K562 (cell line): ENCODE measurements at regions of chr4 and their contacts with region 1.

Region 1: DNA sequence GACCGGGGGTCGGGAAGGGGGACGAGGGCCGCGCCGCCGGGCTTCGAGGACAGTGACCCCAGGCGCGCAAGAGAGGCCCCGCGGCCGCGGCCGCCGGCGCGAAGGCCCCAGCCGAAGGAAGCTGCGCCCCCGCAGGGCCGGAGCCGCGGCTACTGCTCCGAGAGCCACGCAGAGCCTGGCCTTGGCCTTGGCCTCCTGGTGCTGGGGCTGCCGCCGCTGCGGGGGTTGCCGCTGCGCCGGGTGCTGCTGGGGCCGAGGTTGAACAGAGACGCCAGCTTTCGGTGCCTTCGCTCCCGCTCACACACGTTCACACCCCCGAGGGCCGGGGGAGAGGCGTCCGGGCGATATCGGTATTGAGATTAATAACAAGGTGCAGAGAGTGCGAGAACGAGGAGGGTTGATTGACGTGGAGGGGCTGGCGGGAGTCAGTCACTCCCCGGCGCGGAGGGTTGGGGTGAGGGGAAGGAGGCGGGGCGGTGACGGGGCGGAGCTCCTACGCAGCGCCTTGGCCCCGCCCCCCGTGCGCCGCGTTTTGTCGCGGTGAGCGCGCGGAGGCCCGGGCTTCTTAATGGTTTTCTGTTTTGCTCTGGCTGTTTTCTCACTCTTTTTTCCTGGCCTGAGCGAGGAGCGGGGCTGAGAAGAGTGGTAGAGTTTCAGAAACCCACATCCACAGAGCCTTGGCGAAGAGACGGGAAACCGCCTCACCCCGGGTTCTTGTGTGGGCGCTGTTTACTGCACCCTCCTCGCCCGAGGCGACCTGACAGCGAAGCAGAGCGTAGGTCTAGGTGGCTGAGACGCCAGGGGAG is 878 bp upstream of the CNOT6L start:
- DNase-seq: peak; percentile 93 to 94 (median 94)
- ATAC-seq: peak; percentile 87
- H3K4me3 ChIP-seq: peak overlapping the region; percentile 66
- H3K27ac ChIP-seq: peak overlapping the region; percentile 87
- H3K4me1 ChIP-seq: peaks cover 10 to 15% of the 10 kb centered on the region in 2 experiments; a peak in 4 of 5 replicates
- H3K27me3 ChIP-seq: no peaks in the 10 kb centered on the region
- CTCF ChIP-seq: peak; percentile 14 to 15 (median 14); a peak in 2 of 6 replicates
- EP300 ChIP-seq: no peak; the same call in 1 of the 2 replicates
- POLR2A ChIP-seq: peak; percentile 93
- RAD21 ChIP-seq: no peak

Region 2: DNA sequence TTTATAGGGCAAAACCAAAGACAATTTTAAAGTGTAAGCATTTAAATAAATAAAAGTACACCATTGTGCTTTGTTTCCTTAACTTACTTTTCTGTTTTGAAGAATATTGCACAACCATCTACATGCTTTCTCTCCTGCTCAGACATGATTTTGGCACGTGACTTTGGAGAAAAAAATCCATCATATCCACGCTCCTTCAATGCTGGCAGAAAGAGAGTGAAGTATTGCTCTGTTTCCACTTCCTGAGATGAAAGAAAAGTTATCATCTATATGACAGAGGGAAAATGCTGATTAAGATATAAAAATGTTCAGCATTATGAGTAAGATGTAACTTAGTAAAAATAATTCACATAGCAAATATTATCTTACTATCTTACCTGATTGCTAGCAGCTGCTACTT is 78.0 kb before region 1 on chr4:
- CTCF ChIA-PET with region 1: no interaction called
- POLR2A ChIA-PET with region 1: no interaction called
- in situ Hi-C with region 1: no loop called
- intact Hi-C with region 1: loop called (anchors 10 kb)
- DNase-seq: no peak
- ATAC-seq: no peak
- H3K4me3 ChIP-seq: no peak overlapping the region
- H3K27ac ChIP-seq: no peak overlapping the region
- H3K4me1 ChIP-seq: no peaks in the 10 kb centered on the region
- H3K27me3 ChIP-seq: no peaks in the 10 kb centered on the region
- CTCF ChIP-seq: no peak
- EP300 ChIP-seq: no peak
- POLR2A ChIP-seq: no peak
- RAD21 ChIP-seq: no peak

Region 3: GRCh38 chr4:77862478-77863216 is 42.6 kb after region 1 on chr4 and contains the start of gene MRPL1:
- CTCF ChIA-PET with region 1: no interaction called
- POLR2A ChIA-PET with region 1: interaction called, 22 read pairs
- in situ Hi-C with region 1: no loop called
- intact Hi-C with region 1: loop called (anchors 1 kb)
- DNase-seq: peak; percentile 75 to 94 (median 80)
- ATAC-seq: peak; percentile 94
- H3K4me3 ChIP-seq: peak within 1 kb of the TSS; percentile 87
- H3K27ac ChIP-seq: peak within 1 kb of the TSS; percentile 88
- H3K4me1 ChIP-seq: peaks cover 0 to 5% of the 10 kb centered on the region in 2 experiments; a peak in 2 of 5 replicates
- H3K27me3 ChIP-seq: no peaks in the 10 kb centered on the region
- CTCF ChIP-seq: no peak
- EP300 ChIP-seq: peak; percentile 68
- POLR2A ChIP-seq: peak; percentile 96
- RAD21 ChIP-seq: peak; percentile 2 to 5; a peak in 1 of 4 replicates
- polyA plus RNA-seq, gene MRPL1: 65.4 to 75.7 TPM